ENCODE measurements at regions of chr2 and their contacts with region 1.

Region 1: GRCh38 chr2:113157118-113157896 is 16.5 kb upstream of the PSD4 start:
- DNase-seq: peak in 6 of 10 donors; percentile 30 to 59 (median 50)
- ATAC-seq: peak; percentile 87
- H3K4me3 Mint-ChIP-seq: peak overlapping the region; percentile 83 to 93 (median 87)
- H3K27ac Mint-ChIP-seq: peak overlapping the region in 9 of 10 donors; percentile 81 to 96 (median 91)
- H3K4me1 Mint-ChIP-seq: peaks cover 9 to 34% (median 26%) of the 10 kb centered on the region in 4 donors
- H3K27me3 Mint-ChIP-seq: no peaks in the 10 kb centered on the region

Region 2: GRCh38 chr2:112985090-112985489 is 172.2 kb before region 1 on chr2:
- POLR2A ChIA-PET with region 1: no interaction called
- DNase-seq: peak in 9 of 10 donors; percentile 21 to 80 (median 60)
- ATAC-seq: peak; percentile 96 to 98
- H3K4me3 Mint-ChIP-seq: peak overlapping the region in 6 of 10 donors; percentile 2 to 54 (median 24)
- H3K27ac Mint-ChIP-seq: peak overlapping the region; percentile 37 to 90 (median 85)
- H3K4me1 Mint-ChIP-seq: peaks cover 17 to 34% (median 27%) of the 10 kb centered on the region in 4 donors
- H3K27me3 Mint-ChIP-seq: no peaks in the 10 kb centered on the region

Region 3: DNA sequence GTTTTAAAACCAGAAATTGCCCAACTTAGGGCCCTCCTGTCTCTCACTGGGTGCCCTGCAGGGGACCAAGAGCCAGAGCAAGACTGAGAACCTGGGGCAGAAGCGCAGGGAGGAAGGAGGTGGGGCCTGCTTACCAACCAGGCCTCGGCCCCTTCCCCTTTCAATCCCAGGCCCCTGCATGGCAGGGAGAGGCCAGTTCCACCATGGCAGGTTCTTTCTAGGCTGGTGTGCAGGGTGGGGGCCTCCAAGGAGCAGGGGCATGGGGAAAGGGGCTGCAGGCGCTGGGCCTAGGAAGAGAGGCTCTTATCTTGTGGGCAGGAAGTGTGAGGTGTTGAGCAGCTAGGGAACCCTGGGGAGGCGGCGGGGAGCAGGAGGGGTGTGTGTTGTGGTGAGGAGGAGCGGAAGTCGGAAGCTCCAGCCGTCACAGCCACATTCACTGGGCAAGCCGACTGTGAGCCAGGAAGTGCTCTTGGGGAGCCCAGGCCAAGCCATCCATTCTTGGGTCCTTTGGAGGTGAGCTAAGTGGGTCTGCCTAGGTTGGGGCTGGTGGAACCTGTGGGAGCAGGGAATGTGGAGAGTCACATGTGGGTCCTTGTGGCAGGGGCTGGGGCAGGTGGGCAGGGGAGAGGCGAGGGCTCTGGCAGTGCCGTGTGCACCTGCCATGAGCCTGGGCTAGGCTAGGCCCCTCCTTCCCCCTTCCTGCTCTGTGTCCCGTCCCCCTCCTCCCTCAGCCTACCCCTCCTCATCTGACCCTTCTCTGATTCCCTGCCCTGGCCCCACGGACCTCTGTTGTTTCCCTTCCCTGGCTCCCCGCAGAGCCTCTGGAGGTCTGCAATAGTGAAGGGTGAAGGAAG is 16.5 kb after region 1 on chr2 and contains the start of gene PSD4:
- POLR2A ChIA-PET with region 1: interaction called, 318 read pairs
- DNase-seq: peak; percentile 57 to 93 (median 86)
- ATAC-seq: peak; percentile 79 to 85
- H3K4me3 Mint-ChIP-seq: peak within 1 kb of the TSS; percentile 81 to 96 (median 94)
- H3K27ac Mint-ChIP-seq: peak within 1 kb of the TSS; percentile 84 to 97 (median 94)
- H3K4me1 Mint-ChIP-seq: peaks cover 49 to 84% (median 79%) of the 10 kb centered on the region in 4 donors
- H3K27me3 Mint-ChIP-seq: peaks cover 0 to 2% (median 0%) of the 10 kb centered on the region in 5 donors
- polyA plus RNA-seq, gene PSD4: 22.8 to 44.1 (median 29.9) TPM

Measured in naive thymus-derived CD8-positive, alpha-beta T cell (primary cell).